GM12878 (cell line): ENCODE measurements at regions of chr2 and their contacts with region 1.

Region 1: GRCh38 chr2:224946895-224947294 is 95.4 kb downstream of the DOCK10 start:
- DNase-seq: no peak
- ATAC-seq: peak; percentile 54
- H3K4me3 ChIP-seq: peak overlapping the region; percentile 78
- H3K27ac ChIP-seq: peak overlapping the region; percentile 86
- H3K4me1 ChIP-seq: peaks cover 49% of the 10 kb centered on the region
- H3K27me3 ChIP-seq: no peaks in the 10 kb centered on the region
- CTCF ChIP-seq: no peak
- EP300 ChIP-seq: peak in 1 of 2 experiments; percentile 52; a peak in 1 of 4 replicates
- POLR2A ChIP-seq: no peak
- RAD21 ChIP-seq: no peak

Region 2: GRCh38 chr2:224894356-224894755 is 52.5 kb before region 1 on chr2:
- CTCF ChIA-PET with region 1: interaction called, 4 read pairs
- POLR2A ChIA-PET with region 1: interaction called, 5 read pairs
- RAD21 ChIA-PET with region 1: interaction called, 5 read pairs
- SMC1A ChIA-PET with region 1: interaction called, 25 read pairs
- in situ Hi-C with region 1: no loop called
- intact Hi-C with region 1: no loop called
- DNase-seq: peak; percentile 71
- ATAC-seq: peak; percentile 90
- H3K4me3 ChIP-seq: peak overlapping the region; percentile 13; the same call in 1 of the 2 replicates
- H3K27ac ChIP-seq: peak overlapping the region; percentile 88
- H3K4me1 ChIP-seq: peaks cover 40% of the 10 kb centered on the region
- H3K27me3 ChIP-seq: no peaks in the 10 kb centered on the region
- CTCF ChIP-seq: no peak
- EP300 ChIP-seq: no peak
- POLR2A ChIP-seq: no peak
- RAD21 ChIP-seq: no peak

Region 3: GRCh38 chr2:224958873-224959272 is 12.0 kb after region 1 on chr2:
- CTCF ChIA-PET with region 1: interaction called, 10 read pairs
- POLR2A ChIA-PET with region 1: interaction called, 4 read pairs
- RAD21 ChIA-PET with region 1: interaction called, 14 read pairs
- SMC1A ChIA-PET with region 1: interaction called, 443 read pairs
- in situ Hi-C with region 1: no loop called
- intact Hi-C with region 1: no loop called
- DNase-seq: no peak
- ATAC-seq: no peak
- H3K4me3 ChIP-seq: no peak overlapping the region
- H3K27ac ChIP-seq: no peak overlapping the region
- H3K4me1 ChIP-seq: peaks cover 49% of the 10 kb centered on the region
- H3K27me3 ChIP-seq: no peaks in the 10 kb centered on the region
- CTCF ChIP-seq: no peak
- EP300 ChIP-seq: no peak
- POLR2A ChIP-seq: no peak
- RAD21 ChIP-seq: no peak

Region 4: GRCh38 chr2:225270861-225271260 is 324.0 kb after region 1 on chr2:
- CTCF ChIA-PET with region 1: no interaction called
- POLR2A ChIA-PET with region 1: no interaction called
- RAD21 ChIA-PET with region 1: no interaction called
- SMC1A ChIA-PET with region 1: no interaction called
- in situ Hi-C with region 1: no loop called
- intact Hi-C with region 1: loop called (anchors 5 kb)
- DNase-seq: peak; percentile 82
- ATAC-seq: peak; percentile 97
- H3K4me3 ChIP-seq: no peak overlapping the region; the same call in 1 of the 2 replicates
- H3K27ac ChIP-seq: peak overlapping the region; percentile 42; the same call in 1 of the 2 replicates
- H3K4me1 ChIP-seq: peaks cover 23% of the 10 kb centered on the region
- H3K27me3 ChIP-seq: no peaks in the 10 kb centered on the region
- CTCF ChIP-seq: peak in 1 of 3 experiments; percentile 8; a peak in 1 of 6 replicates
- EP300 ChIP-seq: peak in 1 of 2 experiments; percentile 91; a peak in 2 of 4 replicates
- POLR2A ChIP-seq: no peak
- RAD21 ChIP-seq: no peak